Activated CD4-positive, alpha-beta T cell treated with anti-CD3 and anti-CD28 coated beads for 36 hours (primary cell): ENCODE measurements at regions of chr19 and their contacts with region 1.

Region 1: DNA sequence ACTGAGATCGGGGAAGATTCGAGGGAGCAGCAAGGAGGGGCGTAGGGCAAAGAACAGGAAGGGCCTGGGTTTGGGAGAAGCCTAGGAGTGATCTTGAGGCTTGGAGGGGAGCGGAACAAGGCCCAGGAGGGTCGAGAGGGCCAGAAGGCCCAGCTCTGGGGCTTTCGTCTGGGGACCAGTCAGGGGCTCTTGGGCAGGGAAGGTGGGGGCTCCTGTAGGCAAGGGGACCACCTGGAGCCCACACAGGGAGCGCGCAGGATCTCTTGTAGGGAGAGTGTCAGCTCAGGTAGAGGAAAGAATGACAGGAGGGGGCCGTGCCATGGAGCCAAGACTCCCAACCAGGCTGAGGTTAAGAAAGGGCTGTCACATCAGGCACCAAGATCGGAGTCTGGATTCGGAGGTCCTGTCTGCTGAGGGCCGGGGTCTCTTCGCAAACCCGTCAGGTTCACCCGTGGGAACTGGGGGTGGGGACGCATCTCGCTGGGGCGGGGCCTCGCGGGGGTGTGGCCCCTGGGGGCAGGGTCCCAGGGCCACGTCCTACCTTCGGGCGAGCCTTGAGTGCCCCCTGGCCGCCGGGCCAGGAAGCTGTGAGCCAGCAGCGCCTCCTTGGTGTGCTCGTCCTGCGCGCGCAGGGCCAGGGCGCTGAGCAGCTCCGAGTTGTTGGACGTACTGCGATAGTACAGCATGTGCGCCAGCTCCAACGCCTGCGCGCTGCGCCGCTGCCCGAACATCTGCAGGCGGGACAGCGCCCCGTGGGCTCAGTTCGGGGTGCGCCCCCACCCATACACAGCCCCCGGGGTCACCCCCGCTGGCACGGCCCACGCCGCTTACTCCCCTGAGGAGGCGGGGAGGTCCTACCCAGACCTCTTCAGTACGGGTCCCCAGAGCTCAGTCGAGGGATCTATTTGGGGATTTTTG is 8.4 kb downstream of the EMP3 start:
- DNase-seq: peak; percentile 97
- ATAC-seq: peak; percentile 72
- H3K4me3 Mint-ChIP-seq: peak overlapping the region; percentile 97
- H3K27ac Mint-ChIP-seq: peak overlapping the region; percentile 98
- H3K4me1 Mint-ChIP-seq: peaks cover 49% of the 10 kb centered on the region
- H3K27me3 Mint-ChIP-seq: no peaks in the 10 kb centered on the region

Region 2: GRCh38 chr19:47256688-47257443 is 1076.9 kb before region 1 on chr19:
- CTCF ChIA-PET with region 1: no interaction called
- POLR2A ChIA-PET with region 1: no interaction called
- intact Hi-C with region 1: loop called in 1 of 2 experiments (anchors 2 kb)
- DNase-seq: peak; percentile 100
- ATAC-seq: peak; percentile 86
- H3K4me3 Mint-ChIP-seq: peak overlapping the region; percentile 90
- H3K27ac Mint-ChIP-seq: peak overlapping the region; percentile 93
- H3K4me1 Mint-ChIP-seq: peaks cover 31% of the 10 kb centered on the region
- H3K27me3 Mint-ChIP-seq: no peaks in the 10 kb centered on the region

Region 3: DNA sequence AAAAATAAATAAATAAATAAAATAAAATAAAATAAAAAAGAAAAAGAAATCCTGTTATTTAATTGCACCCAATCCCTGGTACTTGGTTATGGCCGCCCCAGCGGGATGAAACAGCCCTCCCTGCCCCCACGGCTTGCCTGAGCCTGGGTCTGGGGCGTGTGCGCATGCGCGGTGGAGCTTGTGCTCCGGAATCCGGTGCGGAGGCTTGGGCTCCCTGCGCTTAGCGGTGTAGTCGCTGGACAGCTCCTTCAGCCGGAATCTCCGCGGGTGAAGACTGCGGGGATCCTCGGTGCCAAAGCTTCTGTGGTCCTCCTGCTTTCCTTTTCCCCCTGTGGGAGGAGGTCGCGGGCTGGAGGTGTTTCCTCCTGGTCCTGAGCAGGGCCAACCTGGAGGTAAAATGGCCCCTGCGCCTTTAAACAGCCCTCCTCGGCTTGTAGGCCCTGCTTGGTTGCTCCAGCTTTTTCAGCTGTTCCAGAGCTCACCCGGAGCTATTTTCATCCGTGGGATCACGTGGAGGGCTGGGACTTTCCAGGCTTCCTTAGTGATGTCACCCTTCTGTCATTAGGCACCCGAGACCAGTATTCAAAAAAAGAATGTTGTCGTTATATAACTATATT is 223.3 kb before region 1 on chr19 and contains the start of gene PLA2G4C:
- CTCF ChIA-PET with region 1: no interaction called
- POLR2A ChIA-PET with region 1: no interaction called
- intact Hi-C with region 1: no loop called
- DNase-seq: peak; percentile 93
- ATAC-seq: peak; percentile 84
- H3K4me3 Mint-ChIP-seq: peak within 1 kb of the TSS; percentile 81
- H3K27ac Mint-ChIP-seq: peak within 1 kb of the TSS; percentile 95
- H3K4me1 Mint-ChIP-seq: peaks cover 20% of the 10 kb centered on the region
- H3K27me3 Mint-ChIP-seq: no peaks in the 10 kb centered on the region
- total RNA-seq, gene PLA2G4C: 11.5 to 12.4 TPM

Region 4: GRCh38 chr19:48271531-48272151 is 62.1 kb before region 1 on chr19:
- CTCF ChIA-PET with region 1: interaction called, 11 read pairs
- POLR2A ChIA-PET with region 1: no interaction called
- intact Hi-C with region 1: loop called in 1 of 2 experiments (anchors 5 kb)
- DNase-seq: peak; percentile 24
- ATAC-seq: peak; percentile 34
- H3K4me3 Mint-ChIP-seq: peak overlapping the region; percentile 75
- H3K27ac Mint-ChIP-seq: no peak overlapping the region
- H3K4me1 Mint-ChIP-seq: peaks cover 12% of the 10 kb centered on the region
- H3K27me3 Mint-ChIP-seq: peaks cover 20% of the 10 kb centered on the region

Region 5: DNA sequence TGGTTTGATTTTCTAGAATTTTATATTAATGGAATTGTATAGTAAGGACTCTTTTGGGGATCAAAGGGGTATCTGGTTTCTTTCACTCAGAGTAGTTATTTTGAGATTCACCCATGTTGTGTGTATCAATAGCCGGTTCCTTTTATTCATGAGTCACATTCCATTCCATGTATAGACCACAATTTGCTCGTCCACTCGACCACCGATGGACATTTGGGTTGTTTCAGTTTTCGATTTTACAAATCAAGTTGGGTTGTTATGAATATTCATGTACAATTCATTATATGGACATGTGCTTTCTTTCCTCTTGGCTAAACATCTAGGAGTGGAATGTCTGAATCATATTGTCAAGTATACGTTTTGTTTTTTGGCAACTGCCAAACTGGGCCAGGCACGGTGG is 18.0 kb before region 1 on chr19:
- CTCF ChIA-PET with region 1: interaction called, 55 read pairs
- POLR2A ChIA-PET with region 1: interaction called, 23 read pairs
- intact Hi-C with region 1: loop called in 1 of 2 experiments (anchors 1 kb)
- DNase-seq: no peak
- ATAC-seq: no peak
- H3K4me3 Mint-ChIP-seq: no peak overlapping the region
- H3K27ac Mint-ChIP-seq: no peak overlapping the region
- H3K4me1 Mint-ChIP-seq: peaks cover 9% of the 10 kb centered on the region
- H3K27me3 Mint-ChIP-seq: no peaks in the 10 kb centered on the region

Region 6: DNA sequence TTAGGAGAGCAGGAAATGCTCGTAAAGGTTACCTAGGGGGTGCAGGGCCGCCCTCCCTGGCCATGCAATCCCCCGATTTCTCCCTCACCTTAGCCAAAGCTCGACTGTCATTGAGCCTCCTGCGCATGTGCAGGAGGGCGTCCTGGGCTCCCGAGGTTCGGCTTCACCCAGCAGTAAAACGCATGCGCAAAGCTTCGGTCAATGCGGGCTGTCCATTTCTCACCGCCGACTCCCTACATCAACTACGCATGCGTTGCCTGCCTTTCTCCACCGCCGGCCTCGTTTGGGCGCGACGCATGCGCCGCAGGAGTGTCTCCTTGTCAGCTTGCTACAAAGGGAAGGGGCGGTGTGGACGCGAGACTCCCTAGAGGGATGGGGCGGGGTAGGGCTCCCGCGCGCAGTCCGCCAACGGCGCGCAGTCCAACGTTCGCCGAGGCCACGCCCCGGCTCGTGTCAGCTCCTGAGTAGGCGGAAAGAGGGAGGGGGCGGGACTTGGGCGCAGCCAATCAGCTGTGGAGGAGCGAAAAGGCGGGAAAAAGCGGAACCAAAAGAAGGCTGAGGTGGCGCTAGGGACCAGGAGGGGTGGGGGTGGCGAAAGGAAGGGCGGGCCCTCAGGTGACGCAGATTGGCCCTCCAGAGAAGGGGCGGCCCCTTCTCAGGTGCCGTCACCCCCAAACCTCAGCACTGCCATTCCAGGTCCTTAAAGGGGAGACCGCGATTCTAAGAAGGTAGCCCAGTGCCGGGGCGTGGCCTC is 30.3 kb after region 1 on chr19 and contains the starts of genes SYNGR4 and TMEM143:
- CTCF ChIA-PET with region 1: interaction called, 9 read pairs
- POLR2A ChIA-PET with region 1: interaction called, 8 read pairs
- intact Hi-C with region 1: loop called (anchors 1 kb)
- DNase-seq: peak; percentile 99
- ATAC-seq: peak; percentile 90
- H3K4me3 Mint-ChIP-seq: peak within 1 kb of the TSS; percentile 84
- H3K27ac Mint-ChIP-seq: peak within 1 kb of the TSS; percentile 95
- H3K4me1 Mint-ChIP-seq: peaks cover 13% of the 10 kb centered on the region
- H3K27me3 Mint-ChIP-seq: no peaks in the 10 kb centered on the region
- total RNA-seq, gene SYNGR4: 0.25 TPM in 1 of 2 experiments, not detected in the other
- total RNA-seq, gene TMEM143: 18.9 to 21.5 TPM

Region 7: GRCh38 chr19:48419158-48419920 is 85.6 kb after region 1 on chr19:
- CTCF ChIA-PET with region 1: interaction called, 4 read pairs
- POLR2A ChIA-PET with region 1: no interaction called
- intact Hi-C with region 1: loop called in 1 of 2 experiments (anchors 1 kb)
- DNase-seq: peak; percentile 87
- ATAC-seq: peak; percentile 81
- H3K4me3 Mint-ChIP-seq: peak overlapping the region; percentile 29
- H3K27ac Mint-ChIP-seq: peak overlapping the region; percentile 83
- H3K4me1 Mint-ChIP-seq: peaks cover 21% of the 10 kb centered on the region
- H3K27me3 Mint-ChIP-seq: peaks cover 15% of the 10 kb centered on the region

Region 8: DNA sequence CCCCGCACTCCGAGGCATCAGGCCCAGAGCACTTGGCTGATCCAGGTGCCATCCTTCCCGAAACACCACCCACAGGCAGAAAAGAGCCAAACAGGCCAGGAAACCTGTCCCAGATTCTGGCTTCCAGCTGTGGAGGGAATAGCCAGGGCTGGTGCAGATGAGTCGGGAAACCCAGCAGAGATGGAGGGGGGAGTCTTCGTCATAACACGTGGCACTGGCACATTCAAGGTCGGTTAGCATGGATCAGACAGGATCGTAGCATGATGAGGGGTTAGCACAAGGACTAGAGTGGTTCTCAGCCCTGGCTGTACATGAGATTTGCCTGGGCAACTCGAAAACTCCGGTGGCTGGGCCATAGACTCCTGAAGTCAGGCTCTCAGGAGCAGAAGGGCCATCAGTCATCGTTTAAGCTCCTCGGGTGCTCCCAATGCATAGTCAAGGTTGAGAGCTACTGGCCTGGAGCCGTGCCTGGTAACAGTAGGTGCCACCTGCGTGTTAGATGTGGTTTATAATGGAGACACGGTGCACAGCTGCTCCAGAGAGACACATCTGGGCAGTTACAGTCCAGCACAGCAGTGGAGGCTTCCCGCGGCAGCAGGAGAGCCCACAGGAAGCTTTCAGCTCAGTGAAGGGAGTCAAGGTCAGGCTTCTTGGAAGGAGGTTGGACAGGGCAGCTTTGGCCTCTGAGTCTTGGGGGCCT is 141.8 kb after region 1 on chr19:
- CTCF ChIA-PET with region 1: no interaction called
- POLR2A ChIA-PET with region 1: no interaction called
- intact Hi-C with region 1: no loop called
- DNase-seq: no peak
- ATAC-seq: no peak
- H3K4me3 Mint-ChIP-seq: no peak overlapping the region
- H3K27ac Mint-ChIP-seq: peak overlapping the region; percentile 51
- H3K4me1 Mint-ChIP-seq: peaks cover 5% of the 10 kb centered on the region
- H3K27me3 Mint-ChIP-seq: no peaks in the 10 kb centered on the region

Region 9: DNA sequence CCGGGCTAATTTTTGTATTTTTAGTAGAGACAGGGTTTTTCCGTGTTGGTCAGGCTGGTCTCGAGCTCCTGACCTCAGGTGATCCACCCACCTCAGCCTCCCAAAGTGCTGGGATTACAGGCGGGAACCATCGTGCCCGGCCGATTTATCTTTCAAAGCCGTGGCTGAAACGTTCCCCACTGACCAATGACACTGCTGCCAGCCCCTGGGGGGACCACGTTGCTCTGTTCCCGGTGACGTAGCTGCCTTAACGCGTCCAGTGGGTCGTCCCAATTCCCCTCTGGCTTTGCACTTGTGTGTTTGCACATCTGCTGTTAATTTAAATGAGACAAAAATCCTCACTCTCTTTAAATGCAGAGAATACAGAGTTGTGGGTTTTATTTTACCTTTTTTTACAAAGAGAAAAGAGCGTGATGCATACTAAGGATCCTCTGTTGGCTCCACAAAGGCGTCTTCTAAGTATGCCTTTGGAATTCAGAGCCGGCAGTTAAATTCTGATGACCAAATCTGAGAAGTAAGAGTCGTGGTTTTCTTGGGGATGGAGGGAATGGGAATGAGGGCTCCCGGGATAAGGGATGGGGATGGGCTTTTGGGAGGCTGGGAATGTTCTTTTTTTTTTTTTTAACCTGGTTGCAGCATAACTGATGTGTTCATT is 196.5 kb after region 1 on chr19:
- CTCF ChIA-PET with region 1: no interaction called
- POLR2A ChIA-PET with region 1: no interaction called
- intact Hi-C with region 1: no loop called
- DNase-seq: no peak
- ATAC-seq: no peak
- H3K4me3 Mint-ChIP-seq: no peak overlapping the region
- H3K27ac Mint-ChIP-seq: no peak overlapping the region
- H3K4me1 Mint-ChIP-seq: no peaks in the 10 kb centered on the region
- H3K27me3 Mint-ChIP-seq: peaks cover 4% of the 10 kb centered on the region

Region 10: GRCh38 chr19:48713864-48714758 is 380.4 kb after region 1 on chr19:
- CTCF ChIA-PET with region 1: no interaction called
- POLR2A ChIA-PET with region 1: no interaction called
- intact Hi-C with region 1: loop called in 1 of 2 experiments (anchors 1 kb)
- DNase-seq: peak; percentile 99
- ATAC-seq: peak; percentile 93
- H3K4me3 Mint-ChIP-seq: peak overlapping the region; percentile 83
- H3K27ac Mint-ChIP-seq: peak overlapping the region; percentile 84
- H3K4me1 Mint-ChIP-seq: peaks cover 14% of the 10 kb centered on the region
- H3K27me3 Mint-ChIP-seq: no peaks in the 10 kb centered on the region